Breast epithelium (tissue), 4 donors: ENCODE measurements at regions of chr17 and their contacts with region 1.

Region 1: DNA sequence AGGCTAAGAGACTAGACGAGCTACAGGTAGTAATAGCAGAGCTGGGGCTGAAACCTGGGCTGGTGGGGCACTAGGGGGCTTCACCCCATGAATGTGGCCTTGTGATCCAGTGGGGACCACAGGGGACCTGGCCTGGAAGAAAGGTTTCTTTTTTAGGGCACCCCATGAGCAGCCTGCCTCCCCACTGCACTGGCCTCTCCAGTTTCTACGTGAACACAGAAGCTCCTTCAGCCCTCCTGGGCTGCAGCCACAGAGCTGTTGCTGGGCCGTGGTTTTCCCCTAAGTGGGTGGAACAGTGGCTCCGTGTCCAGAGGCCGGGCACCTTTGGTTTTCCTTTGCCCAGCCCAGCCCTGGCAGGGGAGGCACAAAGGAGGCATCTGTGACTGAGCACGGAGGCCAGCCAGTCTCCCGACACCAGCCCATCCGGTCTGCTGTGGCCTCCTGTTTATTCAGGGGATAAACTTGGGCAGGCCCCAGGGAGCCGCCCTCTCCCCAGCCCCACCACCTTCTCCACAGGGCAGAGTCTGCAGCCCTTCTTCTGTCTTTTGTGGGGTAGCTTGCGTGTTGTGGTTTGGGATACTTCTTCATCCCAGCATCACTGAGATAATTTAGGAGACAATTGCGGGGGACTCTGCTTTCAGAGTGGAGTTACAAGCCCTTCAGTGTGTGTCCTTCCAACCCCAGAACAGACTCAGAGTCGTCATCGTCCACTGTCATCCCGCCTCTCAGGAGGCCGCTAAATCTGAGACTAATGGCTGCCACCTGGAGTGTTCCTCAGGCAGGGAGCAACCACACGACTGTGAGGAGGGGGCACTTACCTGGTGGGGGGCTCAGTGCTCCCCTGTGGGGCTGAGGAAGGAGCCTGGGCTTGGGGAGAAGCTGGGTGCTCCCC is 85.3 kb downstream of the RAB11FIP4 start:
- DNase-seq: no peak
- H3K4me3 ChIP-seq: no peak overlapping the region
- H3K27ac ChIP-seq: no peak overlapping the region
- H3K4me1 ChIP-seq: no peaks in the 10 kb centered on the region
- H3K27me3 ChIP-seq: no peaks in the 10 kb centered on the region
- CTCF ChIP-seq: no peak
- POLR2A ChIP-seq: no peak

Region 2: DNA sequence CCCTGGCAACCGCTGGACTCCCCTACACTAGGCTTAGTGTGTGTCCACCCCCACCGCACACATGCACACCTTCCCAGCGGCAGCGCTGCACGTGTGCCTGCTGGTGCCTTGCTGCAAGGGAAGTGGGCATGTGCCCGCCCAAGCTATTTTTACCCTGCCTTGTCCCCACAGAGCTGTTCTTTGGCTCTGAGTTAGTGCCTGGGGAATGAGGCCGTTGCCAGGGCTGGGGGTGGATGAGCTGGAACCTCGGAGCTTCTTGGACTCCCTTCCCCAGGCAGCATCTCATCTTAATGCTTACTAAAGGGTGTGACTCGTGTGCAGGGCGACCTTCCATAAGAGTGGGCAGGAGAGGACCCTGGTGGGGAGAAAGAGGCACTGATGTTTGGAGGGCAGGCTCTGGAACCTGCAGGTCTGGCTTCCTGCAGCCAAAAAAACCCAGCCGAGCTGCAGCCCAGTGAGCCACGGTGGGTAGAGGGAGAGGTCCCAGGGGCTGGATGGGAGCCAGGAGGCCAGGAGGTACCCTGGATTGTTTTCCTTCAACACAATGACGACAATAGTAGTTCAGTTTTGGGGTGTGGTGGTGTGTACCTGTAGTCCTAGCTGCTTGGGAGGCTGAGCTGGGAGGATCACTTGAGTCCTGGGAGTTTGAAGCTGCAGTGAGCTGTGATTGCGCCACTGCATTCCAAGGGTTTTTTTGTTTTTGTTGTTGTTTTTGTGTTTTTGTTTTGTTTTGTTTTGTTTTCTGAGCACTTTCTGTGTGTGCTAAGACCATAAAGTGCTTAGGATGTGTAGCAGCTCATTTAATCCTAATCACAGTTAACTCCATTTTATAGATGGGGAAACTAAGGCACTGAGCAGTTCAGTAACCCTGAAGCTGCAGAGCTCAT is 33.8 kb after region 1 on chr17:
- intact Hi-C with region 1: loop called (anchors 1 kb)
- DNase-seq: no peak
- H3K4me3 ChIP-seq: no peak overlapping the region
- H3K27ac ChIP-seq: no peak overlapping the region
- H3K4me1 ChIP-seq: no peaks in the 10 kb centered on the region
- H3K27me3 ChIP-seq: peaks cover 0 to 3% of the 10 kb centered on the region in 2 donors
- CTCF ChIP-seq: no peak
- POLR2A ChIP-seq: no peak